ENCODE measurements at regions of chr12 and their contacts with region 1.

Region 1: GRCh38 chr12:43676183-43676813 is 82.3 kb downstream of the PUS7L start:
- DNase-seq: peak; percentile 59
- H3K4me3 Mint-ChIP-seq: no peak overlapping the region
- H3K27ac Mint-ChIP-seq: no peak overlapping the region
- H3K4me1 Mint-ChIP-seq: no peaks in the 10 kb centered on the region
- H3K27me3 Mint-ChIP-seq: peaks cover 77% of the 10 kb centered on the region
- CTCF ChIP-seq: peak; percentile 34

Region 2: GRCh38 chr12:43349863-43350262 is 326.4 kb before region 1 on chr12:
- CTCF ChIA-PET with region 1: no interaction called
- POLR2A ChIA-PET with region 1: no interaction called
- intact Hi-C with region 1: loop called (anchors 1 kb)
- DNase-seq: peak; percentile 29
- H3K4me3 Mint-ChIP-seq: no peak overlapping the region
- H3K27ac Mint-ChIP-seq: no peak overlapping the region
- H3K4me1 Mint-ChIP-seq: no peaks in the 10 kb centered on the region
- H3K27me3 Mint-ChIP-seq: peaks cover 46% of the 10 kb centered on the region
- CTCF ChIP-seq: peak; percentile 50

Region 3: DNA sequence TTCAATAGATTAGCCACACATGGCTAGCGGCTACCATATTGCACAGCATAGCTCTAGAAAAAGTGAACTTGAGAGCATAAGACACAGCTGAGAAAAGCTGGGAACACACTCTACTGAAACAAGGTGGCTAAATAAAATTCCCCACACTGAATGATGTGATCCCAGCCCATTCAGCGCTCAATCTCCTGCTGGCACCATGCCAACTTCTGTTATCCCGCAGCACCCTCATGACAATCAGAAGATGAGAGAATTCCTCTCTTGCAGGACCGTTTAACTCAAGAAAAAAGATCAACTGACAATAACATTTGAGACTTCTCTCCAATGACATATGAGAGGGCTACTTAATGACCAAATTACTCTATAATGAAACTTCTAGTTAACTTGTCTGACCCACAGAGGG is 239.7 kb before region 1 on chr12:
- CTCF ChIA-PET with region 1: no interaction called
- POLR2A ChIA-PET with region 1: no interaction called
- intact Hi-C with region 1: loop called (anchors 5 kb)
- DNase-seq: no peak
- H3K4me3 Mint-ChIP-seq: no peak overlapping the region
- H3K27ac Mint-ChIP-seq: no peak overlapping the region
- H3K4me1 Mint-ChIP-seq: no peaks in the 10 kb centered on the region
- H3K27me3 Mint-ChIP-seq: peaks cover 57% of the 10 kb centered on the region
- CTCF ChIP-seq: no peak

Region 4: GRCh38 chr12:43501703-43502102 is 174.6 kb before region 1 on chr12:
- CTCF ChIA-PET with region 1: interaction called, 5 read pairs
- POLR2A ChIA-PET with region 1: no interaction called
- intact Hi-C with region 1: loop called (anchors 5 kb)
- DNase-seq: peak; percentile 45
- H3K4me3 Mint-ChIP-seq: no peak overlapping the region
- H3K27ac Mint-ChIP-seq: no peak overlapping the region
- H3K4me1 Mint-ChIP-seq: no peaks in the 10 kb centered on the region
- H3K27me3 Mint-ChIP-seq: peaks cover 59% of the 10 kb centered on the region
- CTCF ChIP-seq: peak; percentile 53